ENCODE measurements at regions of chr20 and their contacts with region 1.

Region 1: DNA sequence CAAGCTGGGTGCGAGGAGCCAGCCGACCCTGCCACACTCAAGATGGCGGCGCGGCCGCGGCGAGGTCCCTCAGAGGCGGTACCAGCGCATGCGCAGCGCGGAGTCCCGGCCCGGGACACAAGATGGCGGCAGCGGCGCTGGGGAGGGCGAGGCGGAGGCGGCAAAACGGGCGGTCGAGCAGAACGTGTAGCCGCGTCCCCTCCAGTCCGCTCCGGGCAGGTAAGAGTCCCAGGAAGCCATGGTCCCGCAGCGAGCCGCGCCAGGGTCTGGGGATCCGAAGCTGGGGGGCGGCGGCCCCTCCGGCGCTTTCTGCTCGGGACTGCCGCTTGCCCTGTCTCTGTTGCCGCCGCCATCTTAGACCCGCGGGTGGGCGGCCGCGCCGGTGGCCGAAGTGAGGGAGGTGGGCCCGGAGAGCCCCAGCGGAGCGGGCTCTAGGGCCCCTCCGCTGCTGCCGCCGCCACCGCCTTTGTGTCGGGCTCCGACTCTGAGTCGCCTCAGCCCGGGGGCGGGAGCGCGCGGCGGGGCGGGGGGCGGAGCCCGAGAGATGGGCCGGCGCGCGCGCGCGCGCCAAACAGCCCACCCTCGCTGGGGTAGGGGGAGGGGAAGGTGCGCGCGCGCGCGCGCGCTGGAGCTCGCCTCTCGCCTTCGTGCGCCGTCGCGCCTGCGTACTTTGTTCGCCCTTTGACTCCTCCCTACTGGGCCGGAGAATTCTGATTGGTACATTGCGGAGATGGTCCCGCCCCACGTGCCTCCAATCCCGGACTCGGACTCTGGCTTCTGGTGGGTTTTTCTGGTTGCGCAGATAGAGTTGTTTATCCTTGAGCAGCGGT is at the start of gene PCIF1:
- DNase-seq: peak; percentile 97 to 100 (median 98)
- ATAC-seq: peak; percentile 79
- H3K4me3 ChIP-seq: peak within 1 kb of the TSS; percentile 95 to 99
- H3K4me3 Mint-ChIP-seq: peak within 1 kb of the TSS; percentile 83
- H3K27ac ChIP-seq: peak within 1 kb of the TSS; percentile 94 to 98
- H3K27ac Mint-ChIP-seq: peak within 1 kb of the TSS; percentile 98
- H3K4me1 ChIP-seq: peaks cover 11% of the 10 kb centered on the region
- H3K4me1 Mint-ChIP-seq: peaks cover 29% of the 10 kb centered on the region
- H3K27me3 ChIP-seq: no peaks in the 10 kb centered on the region
- H3K27me3 Mint-ChIP-seq: no peaks in the 10 kb centered on the region
- CTCF ChIP-seq: no peak
- total RNA-seq, gene PCIF1: 112 to 118 TPM

Region 2: GRCh38 chr20:45792332-45792686 is 142.5 kb before region 1 on chr20:
- CTCF ChIA-PET with region 1: no interaction called
- POLR2A ChIA-PET with region 1: interaction called, 4 read pairs
- intact Hi-C with region 1: loop called (anchors 1 to 2 kb)
- DNase-seq: peak in 3 of 9 experiments; percentile 8 to 20 (median 12)
- ATAC-seq: peak; percentile 10
- H3K4me3 ChIP-seq: peak overlapping the region; percentile 82 to 100
- H3K4me3 Mint-ChIP-seq: peak overlapping the region; percentile 93
- H3K27ac ChIP-seq: peak overlapping the region; percentile 87 to 96
- H3K27ac Mint-ChIP-seq: peak overlapping the region; percentile 93
- H3K4me1 ChIP-seq: peaks cover 16% of the 10 kb centered on the region
- H3K4me1 Mint-ChIP-seq: peaks cover 19% of the 10 kb centered on the region
- H3K27me3 ChIP-seq: no peaks in the 10 kb centered on the region
- H3K27me3 Mint-ChIP-seq: no peaks in the 10 kb centered on the region
- CTCF ChIP-seq: no peak

Region 3: GRCh38 chr20:45857114-45857881 is 77.5 kb before region 1 on chr20 and contains the starts of genes ACOT8 and ZSWIM3:
- CTCF ChIA-PET with region 1: no interaction called
- POLR2A ChIA-PET with region 1: interaction called, 36 read pairs
- intact Hi-C with region 1: loop called (anchors 1 kb)
- DNase-seq: peak; percentile 79 to 100 (median 91)
- ATAC-seq: peak; percentile 96
- H3K4me3 ChIP-seq: peak within 1 kb of the TSS; percentile 82 to 87
- H3K4me3 Mint-ChIP-seq: peak within 1 kb of the TSS; percentile 96
- H3K27ac ChIP-seq: peak within 1 kb of the TSS; percentile 80 to 93
- H3K27ac Mint-ChIP-seq: peak within 1 kb of the TSS; percentile 99
- H3K4me1 ChIP-seq: peaks cover 29% of the 10 kb centered on the region
- H3K4me1 Mint-ChIP-seq: peaks cover 52% of the 10 kb centered on the region
- H3K27me3 ChIP-seq: no peaks in the 10 kb centered on the region
- H3K27me3 Mint-ChIP-seq: no peaks in the 10 kb centered on the region
- CTCF ChIP-seq: no peak
- total RNA-seq, gene ACOT8: 14.5 to 17.0 TPM
- total RNA-seq, gene ZSWIM3: 0.30 to 0.58 TPM

Region 4: DNA sequence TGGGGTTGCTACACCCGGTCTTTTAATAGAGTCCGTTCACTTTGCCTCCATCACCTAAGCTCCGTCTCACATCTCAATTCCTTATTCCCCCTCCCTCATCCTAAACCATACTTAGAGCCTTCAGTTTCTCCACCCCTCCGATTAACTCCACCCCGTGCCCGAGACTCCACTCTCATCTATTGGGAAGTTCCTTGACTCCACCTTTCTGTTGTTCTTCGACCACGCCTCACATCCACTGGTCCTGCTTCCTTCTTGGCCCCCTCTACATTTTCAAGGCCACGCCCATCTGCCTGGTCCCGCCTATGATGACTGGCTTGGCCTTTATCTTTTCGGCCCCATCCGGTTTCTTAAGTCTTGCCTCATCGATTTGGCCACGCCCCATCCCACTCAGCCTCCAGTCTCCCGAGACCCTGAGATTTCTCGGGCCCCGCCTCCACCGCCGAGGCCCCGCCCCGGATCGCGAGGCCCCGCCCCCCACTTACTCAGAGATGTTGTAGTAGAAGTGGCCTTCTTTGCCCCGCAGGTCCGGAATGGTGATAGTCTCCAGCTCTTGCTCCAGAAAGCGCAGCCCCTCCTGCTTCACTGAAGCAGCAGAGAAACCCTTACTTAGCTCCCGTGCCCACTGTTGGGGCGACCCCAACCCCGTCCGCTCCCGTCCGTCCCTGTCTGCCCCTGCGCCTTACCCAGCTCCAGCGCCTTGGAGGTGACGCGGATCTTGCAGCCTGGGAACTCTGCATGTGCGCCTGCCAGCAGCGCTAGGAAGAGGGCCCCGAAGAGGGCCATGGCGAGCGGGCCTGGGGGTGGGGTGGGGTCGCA is 23.9 kb before region 1 on chr20:
- CTCF ChIA-PET with region 1: no interaction called
- POLR2A ChIA-PET with region 1: interaction called, 10 read pairs
- intact Hi-C with region 1: loop called (anchors 1 kb)
- DNase-seq: peak; percentile 78 to 93 (median 88)
- ATAC-seq: peak; percentile 95
- H3K4me3 ChIP-seq: peak overlapping the region; percentile 53 to 75
- H3K4me3 Mint-ChIP-seq: peak overlapping the region; percentile 89
- H3K27ac ChIP-seq: no peak overlapping the region
- H3K27ac Mint-ChIP-seq: peak overlapping the region; percentile 14
- H3K4me1 ChIP-seq: peaks cover 17% of the 10 kb centered on the region
- H3K4me1 Mint-ChIP-seq: peaks cover 16% of the 10 kb centered on the region
- H3K27me3 ChIP-seq: peaks cover 0 to 5% of the 10 kb centered on the region in 2 experiments
- H3K27me3 Mint-ChIP-seq: peaks cover 15% of the 10 kb centered on the region
- CTCF ChIP-seq: no peak

Region 5: DNA sequence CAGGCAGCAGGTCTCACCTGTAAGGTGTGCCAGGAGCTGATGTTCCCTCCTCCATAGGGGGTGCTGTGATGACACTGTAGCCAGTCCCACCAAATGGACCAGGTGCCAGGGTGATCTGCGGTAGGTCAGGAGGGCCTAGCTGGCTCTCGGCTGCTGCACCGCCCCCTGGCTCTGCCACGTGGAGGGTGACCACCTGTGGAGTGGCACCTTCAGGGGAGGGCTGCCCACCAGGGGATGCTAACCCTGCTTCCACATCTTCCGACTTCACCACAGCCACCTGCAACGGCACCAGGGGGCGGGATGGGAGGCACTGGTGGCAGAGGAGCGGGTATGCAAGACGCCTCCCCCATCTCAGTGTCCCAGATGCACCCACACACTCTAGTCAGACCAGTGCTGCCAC is 18.9 kb after region 1 on chr20:
- CTCF ChIA-PET with region 1: interaction called, 4 read pairs
- POLR2A ChIA-PET with region 1: interaction called, 34 read pairs
- intact Hi-C with region 1: loop called in 1 of 2 experiments (anchors 2 kb)
- DNase-seq: peak in 2 of 9 experiments; percentile 3 to 17
- ATAC-seq: no peak
- H3K4me3 ChIP-seq: no peak overlapping the region
- H3K4me3 Mint-ChIP-seq: no peak overlapping the region
- H3K27ac ChIP-seq: no peak overlapping the region
- H3K27ac Mint-ChIP-seq: no peak overlapping the region
- H3K4me1 ChIP-seq: no peaks in the 10 kb centered on the region
- H3K4me1 Mint-ChIP-seq: peaks cover 3% of the 10 kb centered on the region
- H3K27me3 ChIP-seq: no peaks in the 10 kb centered on the region
- H3K27me3 Mint-ChIP-seq: no peaks in the 10 kb centered on the region
- CTCF ChIP-seq: no peak

Region 6: GRCh38 chr20:46089417-46090388 is 154.9 kb after region 1 on chr20 and contains the start of gene NCOA5:
- CTCF ChIA-PET with region 1: no interaction called
- POLR2A ChIA-PET with region 1: interaction called, 3 read pairs
- intact Hi-C with region 1: loop called in 1 of 2 experiments (anchors 1 kb)
- DNase-seq: peak; percentile 89 to 96 (median 94)
- ATAC-seq: peak; percentile 93
- H3K4me3 ChIP-seq: peak within 1 kb of the TSS; percentile 84 to 86
- H3K4me3 Mint-ChIP-seq: peak within 1 kb of the TSS; percentile 89
- H3K27ac ChIP-seq: peak within 1 kb of the TSS; percentile 80 to 85
- H3K27ac Mint-ChIP-seq: peak within 1 kb of the TSS; percentile 87
- H3K4me1 ChIP-seq: peaks cover 43% of the 10 kb centered on the region
- H3K4me1 Mint-ChIP-seq: peaks cover 50% of the 10 kb centered on the region
- H3K27me3 ChIP-seq: no peaks in the 10 kb centered on the region
- H3K27me3 Mint-ChIP-seq: no peaks in the 10 kb centered on the region
- CTCF ChIP-seq: no peak
- total RNA-seq, gene NCOA5: 9.6 to 11.7 TPM

Measured in CD8-positive, alpha-beta T cell (primary cell).